ENCODE measurements at regions of chr17 and their contacts with region 1.

Region 1: DNA sequence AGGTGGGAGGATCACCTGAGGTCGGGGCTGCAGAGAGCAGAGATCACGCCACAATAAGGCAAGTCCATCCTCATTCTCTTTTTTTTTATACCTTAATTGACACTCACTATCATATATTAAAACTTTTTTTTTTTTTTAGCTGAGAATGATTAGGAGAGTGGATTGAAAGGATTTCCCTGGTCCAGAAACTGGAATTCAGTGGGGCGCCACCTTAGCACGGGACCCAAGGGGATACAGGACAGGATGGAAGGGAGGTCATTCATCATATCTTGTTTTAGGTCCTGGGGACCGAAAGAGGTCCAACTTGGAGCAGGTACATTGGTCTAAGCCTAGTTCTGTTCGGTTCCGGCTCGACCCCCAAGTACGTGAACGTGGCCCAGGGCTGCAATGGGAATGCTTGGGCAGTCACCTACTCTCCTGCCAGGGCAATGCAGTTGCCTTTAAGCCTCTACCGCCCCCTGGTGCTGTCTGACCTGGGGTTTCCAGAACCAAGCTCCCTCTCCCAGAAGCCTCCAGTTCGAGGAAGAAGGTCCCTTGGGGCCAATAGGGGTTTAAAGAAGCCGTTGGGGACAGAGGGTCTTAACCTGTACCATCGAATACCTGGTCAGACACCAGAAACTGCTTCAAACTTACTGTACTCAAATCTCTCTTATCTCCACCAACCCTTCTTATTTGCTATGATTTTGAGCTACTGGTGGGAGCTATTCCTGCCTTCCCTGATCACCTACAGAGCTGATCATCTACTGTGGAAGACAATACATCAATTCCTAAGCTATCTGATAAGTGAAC is 19.9 kb upstream of the GPATCH8 start:
- DNase-seq: peak; percentile 41
- H3K4me3 ChIP-seq: no peak overlapping the region
- H3K27ac ChIP-seq: no peak overlapping the region
- H3K4me1 ChIP-seq: no peaks in the 10 kb centered on the region
- H3K27me3 ChIP-seq: no peaks in the 10 kb centered on the region
- CTCF ChIP-seq: peak; percentile 54 to 89

Region 2: GRCh38 chr17:44086364-44087311 is 436.4 kb before region 1 on chr17:
- CTCF ChIA-PET with region 1: no interaction called
- dilution Hi-C with region 1: no loop called
- in situ Hi-C with region 1: no loop called
- intact Hi-C with region 1: loop called (anchors 10 kb)
- DNase-seq: peak; percentile 88
- H3K4me3 ChIP-seq: no peak overlapping the region
- H3K27ac ChIP-seq: peak overlapping the region; percentile 56
- H3K4me1 ChIP-seq: peaks cover 27% of the 10 kb centered on the region
- H3K27me3 ChIP-seq: no peaks in the 10 kb centered on the region
- CTCF ChIP-seq: no peak

Region 3: GRCh38 chr17:44324571-44325275 is 198.4 kb before region 1 on chr17 and contains the start of gene SLC25A39:
- CTCF ChIA-PET with region 1: no interaction called
- dilution Hi-C with region 1: no loop called
- in situ Hi-C with region 1: no loop called
- intact Hi-C with region 1: loop called (anchors 1 kb)
- DNase-seq: peak; percentile 92
- H3K4me3 ChIP-seq: peak within 1 kb of the TSS; percentile 77 to 85 (median 83)
- H3K27ac ChIP-seq: peak within 1 kb of the TSS; percentile 73
- H3K4me1 ChIP-seq: peaks cover 8% of the 10 kb centered on the region
- H3K27me3 ChIP-seq: no peaks in the 10 kb centered on the region
- CTCF ChIP-seq: no peak
- total RNA-seq, gene SLC25A39: 116 to 169 TPM

Region 4: DNA sequence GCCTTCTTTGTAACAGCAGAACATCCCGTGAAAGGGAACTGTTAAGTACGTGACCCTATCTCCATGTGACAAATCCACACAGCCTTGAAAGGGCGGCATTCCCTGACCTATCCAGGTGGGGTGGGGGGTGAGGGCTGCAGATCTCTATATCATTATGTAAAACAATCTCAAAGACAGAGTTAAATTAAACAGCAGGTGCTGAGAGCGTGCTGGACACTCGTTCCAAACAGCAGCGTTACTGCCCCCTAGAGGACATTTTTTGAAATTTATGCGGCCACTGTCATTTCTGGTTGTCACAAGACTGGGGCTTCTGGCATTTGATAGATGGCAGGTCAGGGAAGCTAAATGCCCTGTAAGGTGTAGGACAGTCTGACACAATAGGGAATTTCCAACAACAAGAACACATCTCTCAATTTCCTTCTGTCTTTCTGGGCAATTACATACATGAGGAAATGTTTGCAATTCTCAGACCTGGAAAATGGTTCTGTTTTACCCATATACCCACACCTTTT is 191.8 kb before region 1 on chr17:
- CTCF ChIA-PET with region 1: no interaction called
- dilution Hi-C with region 1: no loop called
- in situ Hi-C with region 1: no loop called
- intact Hi-C with region 1: loop called (anchors 1 kb)
- DNase-seq: peak; percentile 53
- H3K4me3 ChIP-seq: no peak overlapping the region
- H3K27ac ChIP-seq: no peak overlapping the region
- H3K4me1 ChIP-seq: no peaks in the 10 kb centered on the region
- H3K27me3 ChIP-seq: no peaks in the 10 kb centered on the region
- CTCF ChIP-seq: peak; percentile 79 to 82

Region 5: DNA sequence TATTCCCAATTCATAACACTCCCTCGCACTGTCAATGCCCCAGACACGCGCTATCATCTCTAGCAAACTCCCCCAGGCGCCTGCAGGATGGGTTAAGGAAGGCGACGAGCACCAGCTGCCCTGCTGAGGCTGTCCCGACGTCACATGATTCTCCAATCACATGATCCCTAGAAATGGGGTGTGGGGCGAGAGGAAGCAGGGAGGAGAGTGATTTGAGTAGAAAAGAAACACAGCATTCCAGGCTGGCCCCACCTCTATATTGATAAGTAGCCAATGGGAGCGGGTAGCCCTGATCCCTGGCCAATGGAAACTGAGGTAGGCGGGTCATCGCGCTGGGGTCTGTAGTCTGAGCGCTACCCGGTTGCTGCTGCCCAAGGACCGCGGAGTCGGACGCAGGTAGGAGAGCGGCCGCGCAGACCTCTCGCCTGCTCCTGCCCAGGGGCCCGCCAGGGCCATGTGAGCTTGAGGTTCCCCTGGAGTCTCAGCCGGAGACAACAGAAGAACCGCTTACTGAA is 178.1 kb before region 1 on chr17 and contains the start of gene GRN:
- CTCF ChIA-PET with region 1: no interaction called
- dilution Hi-C with region 1: no loop called
- in situ Hi-C with region 1: no loop called
- intact Hi-C with region 1: loop called (anchors 5 kb)
- DNase-seq: peak; percentile 98
- H3K4me3 ChIP-seq: peak within 1 kb of the TSS; percentile 79 to 87 (median 86)
- H3K27ac ChIP-seq: peak within 1 kb of the TSS; percentile 67
- H3K4me1 ChIP-seq: peaks cover 34% of the 10 kb centered on the region
- H3K27me3 ChIP-seq: no peaks in the 10 kb centered on the region
- CTCF ChIP-seq: no peak
- total RNA-seq, gene GRN: 288 to 394 TPM

Region 6: DNA sequence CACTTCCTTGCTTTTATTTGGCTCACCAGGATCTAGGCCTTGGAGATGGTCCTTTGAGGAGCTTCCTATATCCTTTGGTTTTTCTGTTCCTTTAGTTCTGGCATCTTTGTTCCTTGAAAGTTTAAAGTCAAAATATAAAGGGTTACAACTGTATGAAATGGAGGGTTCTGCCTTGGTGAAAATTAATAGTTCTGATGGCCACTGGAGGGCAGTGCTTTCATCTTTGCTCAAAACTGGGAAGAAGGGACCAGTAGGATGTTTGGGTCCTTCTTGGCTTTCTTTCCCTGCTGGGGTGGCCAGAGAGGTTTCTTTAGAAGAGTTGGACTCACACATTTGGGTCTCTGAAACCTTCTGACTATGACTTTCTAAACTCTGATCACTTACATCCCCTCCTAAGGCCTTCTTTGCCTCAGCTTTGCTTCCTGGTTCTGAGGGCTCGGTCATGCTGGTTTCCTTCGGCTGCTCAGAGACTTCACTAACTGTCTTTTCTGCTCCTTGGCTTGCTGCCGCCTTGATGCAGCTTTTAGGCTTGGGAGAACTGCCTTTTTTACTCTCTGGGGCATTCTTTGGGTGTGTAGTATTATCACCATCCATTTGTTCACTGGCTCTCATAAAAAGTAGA is 122.7 kb before region 1 on chr17:
- CTCF ChIA-PET with region 1: no interaction called
- dilution Hi-C with region 1: no loop called
- in situ Hi-C with region 1: no loop called
- intact Hi-C with region 1: loop called (anchors 1 kb)
- DNase-seq: no peak
- H3K4me3 ChIP-seq: no peak overlapping the region
- H3K27ac ChIP-seq: no peak overlapping the region
- H3K4me1 ChIP-seq: no peaks in the 10 kb centered on the region
- H3K27me3 ChIP-seq: no peaks in the 10 kb centered on the region
- CTCF ChIP-seq: peak; percentile 33 to 46

Region 7: DNA sequence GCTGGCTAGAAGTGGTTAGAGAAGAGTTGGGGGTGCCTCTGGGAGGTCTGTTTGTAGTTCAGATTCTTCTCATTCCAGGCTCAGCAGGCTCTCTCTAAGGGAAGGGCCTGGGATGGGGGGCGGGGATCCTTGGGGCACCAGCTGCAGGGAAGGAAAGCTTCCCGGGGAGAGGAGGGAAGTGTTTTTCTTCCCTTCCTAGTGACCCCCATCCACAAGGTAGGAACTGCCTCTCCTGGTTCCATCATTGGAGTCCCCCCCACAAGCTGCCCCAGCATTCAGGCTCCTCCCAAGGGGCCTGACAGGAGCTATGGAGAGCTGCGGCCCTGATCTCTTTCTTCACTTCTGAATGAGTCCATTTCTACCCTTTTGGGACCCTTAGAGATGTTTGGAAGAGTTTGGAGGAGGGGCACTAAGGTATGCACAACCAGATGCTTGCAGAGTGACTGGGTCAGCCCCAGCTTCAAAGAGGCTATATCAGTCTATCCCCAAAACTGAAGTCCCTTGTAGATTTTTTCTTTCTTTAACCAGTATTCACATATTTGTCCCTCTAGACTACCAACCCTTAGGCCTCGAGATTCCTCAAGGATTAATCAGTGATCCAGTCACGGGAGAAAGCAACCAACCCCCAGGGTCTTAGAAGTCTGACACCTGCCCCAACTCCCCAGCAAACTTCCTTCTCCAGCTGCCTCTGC is 20.3 kb after region 1 on chr17:
- CTCF ChIA-PET with region 1: no interaction called
- dilution Hi-C with region 1: no loop called
- in situ Hi-C with region 1: no loop called
- intact Hi-C with region 1: no loop called
- DNase-seq: peak; percentile 57
- H3K4me3 ChIP-seq: no peak overlapping the region
- H3K27ac ChIP-seq: peak overlapping the region; percentile 8
- H3K4me1 ChIP-seq: peaks cover 37% of the 10 kb centered on the region
- H3K27me3 ChIP-seq: no peaks in the 10 kb centered on the region
- CTCF ChIP-seq: no peak